Activated CD8-positive, alpha-beta T cell treated with anti-CD3 and anti-CD28 coated beads, Interleukin-2, amount 10 ng/mL, durations not matched to agents 7 days and 5 days (primary cell): ENCODE measurements at regions of chr19 and their contacts with region 1.

Region 1: GRCh38 chr19:54921082-54921481 is 15.1 kb downstream of the NCR1 start:
- DNase-seq: peak; percentile 35
- ATAC-seq: peak; percentile 60
- H3K4me3 Mint-ChIP-seq: no peak overlapping the region
- H3K27ac Mint-ChIP-seq: no peak overlapping the region
- H3K4me1 Mint-ChIP-seq: peaks cover 17% of the 10 kb centered on the region
- H3K27me3 Mint-ChIP-seq: peaks cover 3% of the 10 kb centered on the region

Region 2: DNA sequence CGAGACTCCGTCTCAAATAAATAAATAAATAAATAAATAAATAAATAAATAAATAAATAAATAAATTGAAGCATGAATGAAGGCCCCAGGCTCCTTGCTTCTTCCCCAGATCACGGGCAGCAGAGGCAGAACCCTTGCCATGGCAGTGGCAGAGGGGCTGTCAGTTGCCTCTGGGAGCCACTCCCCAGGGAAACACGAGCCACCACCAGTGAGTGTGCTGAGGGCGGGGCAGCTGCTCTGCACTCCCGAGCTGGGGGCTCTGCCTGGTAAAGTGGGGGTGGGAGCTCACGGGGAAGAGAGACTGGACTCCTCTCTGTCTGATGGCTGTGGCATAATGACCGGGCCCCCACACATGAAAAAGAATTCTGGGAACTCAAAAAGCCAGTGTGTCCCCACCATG is 39.2 kb before region 1 on chr19:
- CTCF ChIA-PET with region 1: interaction called, 13 read pairs
- POLR2A ChIA-PET with region 1: no interaction called
- DNase-seq: no peak
- ATAC-seq: no peak
- H3K4me3 Mint-ChIP-seq: no peak overlapping the region
- H3K27ac Mint-ChIP-seq: no peak overlapping the region
- H3K4me1 Mint-ChIP-seq: peaks cover 21% of the 10 kb centered on the region
- H3K27me3 Mint-ChIP-seq: peaks cover 24% of the 10 kb centered on the region